ENCODE measurements at regions of chr9 and their contacts with region 1.

Region 1: DNA sequence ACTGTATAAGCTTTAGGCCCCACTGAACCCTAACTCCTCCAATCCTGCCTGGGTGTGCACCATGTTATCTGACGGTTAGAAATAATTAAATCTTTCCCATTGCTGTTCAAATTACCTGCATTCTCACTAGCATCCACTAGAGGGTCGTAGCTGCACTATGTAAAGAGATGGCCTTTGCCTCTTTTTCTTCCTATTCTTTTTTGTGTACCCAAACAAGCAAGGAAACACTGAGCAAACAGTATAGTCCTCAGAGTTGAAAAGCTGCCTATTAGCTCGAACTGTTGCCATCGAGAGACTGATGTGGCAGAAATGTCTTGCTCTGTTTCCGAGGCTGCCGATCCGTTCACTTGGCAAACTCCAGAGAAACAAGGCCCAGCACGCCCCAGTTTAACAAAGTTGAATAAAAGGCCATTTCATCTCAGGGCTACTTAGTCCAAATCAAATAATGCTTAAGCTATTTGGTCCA is 163.8 kb upstream of the TRPM3 start:
- DNase-seq: peak; percentile 12 to 56 (median 26)
- ATAC-seq: peak; percentile 83
- H3K4me3 ChIP-seq: no peak overlapping the region
- H3K27ac ChIP-seq: no peak overlapping the region
- H3K4me1 ChIP-seq: no peaks in the 10 kb centered on the region
- H3K27me3 ChIP-seq: no peaks in the 10 kb centered on the region
- CTCF ChIP-seq: peak; percentile 57 to 82 (median 76)
- EP300 ChIP-seq: no peak
- POLR2A ChIP-seq: no peak
- RAD21 ChIP-seq: peak; percentile 50 to 72

Region 2: GRCh38 chr9:71524996-71525580 is 239.9 kb after region 1 on chr9:
- CTCF ChIA-PET with region 1: no interaction called
- POLR2A ChIA-PET with region 1: no interaction called
- in situ Hi-C with region 1: no loop called
- intact Hi-C with region 1: loop called (anchors 10 kb)
- DNase-seq: no peak
- ATAC-seq: no peak
- H3K4me3 ChIP-seq: no peak overlapping the region
- H3K27ac ChIP-seq: no peak overlapping the region
- H3K4me1 ChIP-seq: no peaks in the 10 kb centered on the region
- H3K27me3 ChIP-seq: no peaks in the 10 kb centered on the region
- CTCF ChIP-seq: no peak
- EP300 ChIP-seq: no peak
- POLR2A ChIP-seq: no peak
- RAD21 ChIP-seq: no peak

Region 3: GRCh38 chr9:71604197-71605063 is 319.2 kb after region 1 on chr9:
- CTCF ChIA-PET with region 1: no interaction called
- POLR2A ChIA-PET with region 1: no interaction called
- in situ Hi-C with region 1: no loop called
- intact Hi-C with region 1: loop called (anchors 10 kb)
- DNase-seq: peak; percentile 36 to 75 (median 50)
- ATAC-seq: peak; percentile 92
- H3K4me3 ChIP-seq: no peak overlapping the region
- H3K27ac ChIP-seq: no peak overlapping the region
- H3K4me1 ChIP-seq: no peaks in the 10 kb centered on the region
- H3K27me3 ChIP-seq: no peaks in the 10 kb centered on the region
- CTCF ChIP-seq: peak; percentile 75 to 79 (median 76)
- EP300 ChIP-seq: no peak
- POLR2A ChIP-seq: no peak
- RAD21 ChIP-seq: peak; percentile 79 to 92

Region 4: GRCh38 chr9:71768388-71769174 is 483.4 kb after region 1 on chr9 and contains the start of gene CEMIP2:
- CTCF ChIA-PET with region 1: no interaction called
- POLR2A ChIA-PET with region 1: no interaction called
- in situ Hi-C with region 1: no loop called
- intact Hi-C with region 1: loop called (anchors 2 kb)
- DNase-seq: peak; percentile 81 to 87 (median 83)
- ATAC-seq: peak; percentile 93
- H3K4me3 ChIP-seq: peak within 1 kb of the TSS; percentile 73
- H3K27ac ChIP-seq: peak within 1 kb of the TSS; percentile 66
- H3K4me1 ChIP-seq: peaks cover 14 to 18% of the 10 kb centered on the region in 2 experiments; a peak in 4 of 5 replicates
- H3K27me3 ChIP-seq: peaks cover 0 to 5% of the 10 kb centered on the region in 2 experiments; a peak in 2 of 5 replicates
- CTCF ChIP-seq: peak; percentile 24 to 91 (median 73); a peak in 5 of 6 replicates
- EP300 ChIP-seq: no peak
- POLR2A ChIP-seq: peak; percentile 72
- RAD21 ChIP-seq: peak; percentile 69 to 77
- polyA plus RNA-seq, gene CEMIP2: 5.4 to 5.9 TPM

Region 5: DNA sequence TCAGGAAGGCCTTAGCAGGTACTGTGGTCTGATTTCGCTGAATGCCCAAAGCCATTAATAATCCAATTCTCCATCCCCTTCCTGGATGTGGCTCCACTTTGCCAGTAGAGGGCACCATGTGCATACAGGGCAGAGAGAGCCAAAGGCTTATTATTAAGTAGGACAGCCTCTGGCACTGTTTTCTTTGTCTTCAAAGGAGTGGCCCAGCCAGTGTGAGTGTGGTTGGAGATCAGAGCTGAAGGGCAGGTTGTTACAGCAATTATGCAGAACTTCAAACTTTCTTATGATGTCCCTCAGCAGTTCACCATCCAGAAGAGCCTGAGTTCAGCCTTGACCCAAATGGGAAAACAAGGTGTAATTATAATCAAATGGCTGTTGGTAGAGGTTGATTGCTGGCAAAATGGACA is 521.7 kb after region 1 on chr9:
- CTCF ChIA-PET with region 1: no interaction called
- POLR2A ChIA-PET with region 1: no interaction called
- in situ Hi-C with region 1: loop called (anchors 25 kb)
- intact Hi-C with region 1: no loop called
- DNase-seq: peak; percentile 18 to 57 (median 30)
- ATAC-seq: peak; percentile 94
- H3K4me3 ChIP-seq: no peak overlapping the region
- H3K27ac ChIP-seq: no peak overlapping the region
- H3K4me1 ChIP-seq: no peaks in the 10 kb centered on the region
- H3K27me3 ChIP-seq: no peaks in the 10 kb centered on the region; a peak in 1 of 5 replicates
- CTCF ChIP-seq: peak; percentile 76 to 88 (median 78)
- EP300 ChIP-seq: no peak
- POLR2A ChIP-seq: no peak
- RAD21 ChIP-seq: peak; percentile 76 to 87

Region 6: DNA sequence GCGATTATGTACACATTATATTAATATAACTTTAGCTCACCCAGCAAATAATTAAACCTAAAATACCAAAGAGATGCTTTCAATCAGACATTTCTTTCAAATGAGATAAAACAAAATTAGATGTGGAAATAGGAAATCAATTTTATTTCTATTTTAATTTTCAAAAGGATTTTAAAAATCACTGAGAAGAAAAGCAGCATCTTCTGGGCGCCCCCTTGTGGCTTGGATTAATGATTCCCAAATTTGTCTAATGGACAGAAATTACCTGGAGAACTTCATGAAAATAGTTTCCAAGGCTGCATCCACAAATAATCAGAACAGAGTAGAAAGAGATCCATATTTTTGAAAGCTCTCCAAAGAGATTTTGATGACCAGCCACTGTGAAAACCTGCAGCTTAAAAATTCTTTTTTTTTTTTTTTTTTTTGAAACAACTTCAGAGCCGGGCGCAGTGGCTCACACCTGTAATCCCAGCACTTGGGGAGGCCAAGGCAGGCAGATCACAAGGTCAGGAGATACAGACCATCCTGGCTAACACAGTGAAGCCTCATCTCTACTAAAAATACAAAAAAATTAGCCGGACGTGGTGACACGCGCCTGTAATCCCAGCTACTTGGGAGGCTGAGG is 534.0 kb after region 1 on chr9:
- CTCF ChIA-PET with region 1: no interaction called
- POLR2A ChIA-PET with region 1: no interaction called
- in situ Hi-C with region 1: loop called (anchors 25 kb)
- intact Hi-C with region 1: loop called (anchors 5 kb)
- DNase-seq: peak; percentile 13 to 45 (median 19)
- ATAC-seq: no peak
- H3K4me3 ChIP-seq: no peak overlapping the region
- H3K27ac ChIP-seq: no peak overlapping the region
- H3K4me1 ChIP-seq: no peaks in the 10 kb centered on the region
- H3K27me3 ChIP-seq: peaks cover 0 to 6% of the 10 kb centered on the region in 2 experiments; a peak in 3 of 5 replicates
- CTCF ChIP-seq: peak; percentile 29 to 66 (median 37); a peak in 4 of 6 replicates
- EP300 ChIP-seq: no peak
- POLR2A ChIP-seq: no peak
- RAD21 ChIP-seq: peak in 1 of 2 experiments; percentile 50; a peak in 2 of 4 replicates

Region 7: GRCh38 chr9:72022841-72023240 is 737.6 kb after region 1 on chr9:
- CTCF ChIA-PET with region 1: no interaction called
- POLR2A ChIA-PET with region 1: no interaction called
- in situ Hi-C with region 1: loop called (anchors 25 kb)
- intact Hi-C with region 1: loop called (anchors 1 kb)
- DNase-seq: no peak
- ATAC-seq: no peak
- H3K4me3 ChIP-seq: no peak overlapping the region
- H3K27ac ChIP-seq: no peak overlapping the region
- H3K4me1 ChIP-seq: no peaks in the 10 kb centered on the region
- H3K27me3 ChIP-seq: no peaks in the 10 kb centered on the region; a peak in 2 of 5 replicates
- CTCF ChIP-seq: no peak
- EP300 ChIP-seq: no peak
- POLR2A ChIP-seq: no peak
- RAD21 ChIP-seq: no peak

Measured in K562 (cell line).